Panc1 (cell line): ENCODE measurements at regions of chr10 and their contacts with region 1.

Region 1: DNA sequence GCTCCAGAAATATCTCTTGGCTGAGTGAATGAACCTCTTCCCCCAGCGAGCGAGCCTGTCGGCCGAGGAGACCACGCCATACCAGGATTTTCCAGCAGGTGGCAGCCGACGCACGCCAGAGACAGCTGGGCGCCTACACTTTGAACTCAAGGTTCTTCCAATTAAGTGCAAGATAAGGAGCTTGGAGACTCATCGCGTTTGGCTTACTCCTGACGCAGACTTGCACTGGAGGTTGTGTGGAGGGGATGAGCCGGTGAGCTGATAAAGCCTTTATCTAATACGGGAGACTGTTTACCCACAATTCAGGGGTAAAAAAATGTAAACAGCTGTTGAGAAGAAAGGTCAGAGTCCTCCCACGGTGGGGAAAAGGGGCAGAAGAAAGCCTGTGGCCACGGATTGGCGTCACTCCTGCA is 45.9 kb upstream of the EMX2 start:
- DNase-seq: peak; percentile 63
- ATAC-seq: peak; percentile 93
- H3K4me3 ChIP-seq: no peak overlapping the region
- H3K27ac ChIP-seq: no peak overlapping the region
- H3K4me1 ChIP-seq: no peaks in the 10 kb centered on the region
- H3K27me3 ChIP-seq: peaks cover 19% of the 10 kb centered on the region
- CTCF ChIP-seq: peak; percentile 98

Region 2: GRCh38 chr10:117860823-117861222 is 364.2 kb after region 1 on chr10:
- CTCF ChIA-PET with region 1: no interaction called
- POLR2A ChIA-PET with region 1: no interaction called
- in situ Hi-C with region 1: no loop called
- intact Hi-C with region 1: loop called (anchors 5 kb)
- DNase-seq: peak; percentile 10
- ATAC-seq: peak; percentile 68; the same call in 1 of the 2 replicates
- H3K4me3 ChIP-seq: no peak overlapping the region
- H3K27ac ChIP-seq: no peak overlapping the region
- H3K4me1 ChIP-seq: no peaks in the 10 kb centered on the region
- H3K27me3 ChIP-seq: peaks cover 15% of the 10 kb centered on the region
- CTCF ChIP-seq: peak; percentile 68; the same call in 1 of the 2 replicates

Region 3: GRCh38 chr10:118241229-118242137 is 744.9 kb after region 1 on chr10:
- CTCF ChIA-PET with region 1: interaction called, 4 read pairs
- POLR2A ChIA-PET with region 1: no interaction called
- in situ Hi-C with region 1: no loop called
- intact Hi-C with region 1: loop called (anchors 2 kb)
- DNase-seq: peak; percentile 80
- ATAC-seq: peak; percentile 88
- H3K4me3 ChIP-seq: no peak overlapping the region
- H3K27ac ChIP-seq: no peak overlapping the region
- H3K4me1 ChIP-seq: peaks cover 5% of the 10 kb centered on the region
- H3K27me3 ChIP-seq: peaks cover 68% of the 10 kb centered on the region
- CTCF ChIP-seq: peak; percentile 95

Region 4: GRCh38 chr10:118423800-118424479 is 927.3 kb after region 1 on chr10:
- CTCF ChIA-PET with region 1: interaction called, 4 read pairs
- POLR2A ChIA-PET with region 1: no interaction called
- in situ Hi-C with region 1: no loop called
- intact Hi-C with region 1: loop called (anchors 5 kb)
- DNase-seq: peak; percentile 42
- ATAC-seq: peak; percentile 99
- H3K4me3 ChIP-seq: no peak overlapping the region
- H3K27ac ChIP-seq: no peak overlapping the region
- H3K4me1 ChIP-seq: peaks cover 7% of the 10 kb centered on the region; the same call in 1 of the 2 replicates
- H3K27me3 ChIP-seq: peaks cover 19% of the 10 kb centered on the region
- CTCF ChIP-seq: peak; percentile 94

Region 5: GRCh38 chr10:118543714-118544400 is 1047.2 kb after region 1 on chr10:
- CTCF ChIA-PET with region 1: no interaction called
- POLR2A ChIA-PET with region 1: no interaction called
- in situ Hi-C with region 1: no loop called
- intact Hi-C with region 1: loop called (anchors 10 kb)
- DNase-seq: peak; percentile 42
- ATAC-seq: peak; percentile 94
- H3K4me3 ChIP-seq: no peak overlapping the region
- H3K27ac ChIP-seq: no peak overlapping the region
- H3K4me1 ChIP-seq: no peaks in the 10 kb centered on the region
- H3K27me3 ChIP-seq: peaks cover 30% of the 10 kb centered on the region
- CTCF ChIP-seq: peak; percentile 88